Astrocyte of the cerebellum (primary cell): ENCODE measurements at regions of chr10 and their contacts with region 1.

Region 1: GRCh38 chr10:100033766-100034418 is 24.1 kb upstream of the DNMBP start:
- DNase-seq: no peak
- H3K4me3 ChIP-seq: no peak overlapping the region
- CTCF ChIP-seq: no peak

Region 2: GRCh38 chr10:99141022-99141422 is 892.9 kb before region 1 on chr10:
- in situ Hi-C with region 1: no loop called
- DNase-seq: no peak
- H3K4me3 ChIP-seq: no peak overlapping the region
- CTCF ChIP-seq: no peak

Region 3: DNA sequence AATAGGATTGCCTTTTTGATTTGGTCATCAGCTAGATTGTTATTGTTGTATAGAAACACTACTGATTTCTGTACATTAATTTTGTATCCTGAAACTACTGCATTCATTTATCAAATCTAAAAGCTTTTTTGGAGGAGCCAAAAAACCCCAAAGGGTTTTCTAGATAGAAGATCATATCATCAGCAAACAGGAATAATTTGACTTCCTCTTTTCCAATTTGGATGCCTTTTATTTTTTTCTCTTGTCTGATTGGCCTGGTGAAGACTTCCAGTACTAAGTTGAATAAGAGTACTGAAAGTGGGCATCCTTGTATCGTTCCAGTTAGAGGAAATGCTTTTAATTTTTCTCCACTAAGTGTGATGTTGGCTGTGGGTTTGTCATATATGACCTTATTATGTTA is 385.2 kb before region 1 on chr10:
- in situ Hi-C with region 1: no loop called
- DNase-seq: no peak
- H3K4me3 ChIP-seq: no peak overlapping the region
- CTCF ChIP-seq: no peak

Region 4: DNA sequence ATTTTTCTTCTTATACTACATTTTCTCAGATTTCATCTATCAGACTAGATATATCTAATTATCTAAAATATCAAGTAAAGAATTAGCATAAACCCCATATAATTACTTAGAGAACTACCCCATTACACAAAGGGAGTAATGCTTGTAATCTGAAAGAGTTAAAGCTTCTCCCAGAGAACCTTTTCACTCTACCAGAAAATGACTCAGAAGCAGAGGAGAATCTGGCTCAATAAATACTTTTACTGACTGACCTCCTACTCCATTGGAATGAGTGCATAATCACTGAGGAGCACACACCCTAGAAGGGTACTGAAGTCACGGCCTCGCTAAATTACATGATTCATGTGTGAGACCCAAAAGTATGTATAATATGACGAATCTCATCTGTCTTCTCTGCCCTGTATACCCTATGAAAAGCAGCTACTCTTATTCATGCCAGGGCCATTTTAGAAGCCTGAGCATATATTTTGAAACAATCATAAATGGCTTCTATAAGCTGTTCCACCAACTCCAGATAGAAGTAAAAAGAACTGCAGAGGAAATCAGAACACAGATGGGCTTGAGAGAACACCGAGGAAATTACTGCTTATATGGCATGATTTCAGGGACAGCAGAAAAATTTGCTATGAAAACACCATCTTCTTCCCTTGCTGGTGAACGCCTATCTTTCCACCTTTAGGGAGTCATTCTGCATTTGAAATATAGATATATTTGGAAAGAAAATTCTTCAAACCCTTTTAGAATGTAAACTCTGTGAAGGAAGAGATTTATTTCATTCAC is 56.8 kb before region 1 on chr10:
- in situ Hi-C with region 1: loop called (anchors 5 kb)
- DNase-seq: peak; percentile 59
- H3K4me3 ChIP-seq: no peak overlapping the region
- CTCF ChIP-seq: no peak

Region 5: DNA sequence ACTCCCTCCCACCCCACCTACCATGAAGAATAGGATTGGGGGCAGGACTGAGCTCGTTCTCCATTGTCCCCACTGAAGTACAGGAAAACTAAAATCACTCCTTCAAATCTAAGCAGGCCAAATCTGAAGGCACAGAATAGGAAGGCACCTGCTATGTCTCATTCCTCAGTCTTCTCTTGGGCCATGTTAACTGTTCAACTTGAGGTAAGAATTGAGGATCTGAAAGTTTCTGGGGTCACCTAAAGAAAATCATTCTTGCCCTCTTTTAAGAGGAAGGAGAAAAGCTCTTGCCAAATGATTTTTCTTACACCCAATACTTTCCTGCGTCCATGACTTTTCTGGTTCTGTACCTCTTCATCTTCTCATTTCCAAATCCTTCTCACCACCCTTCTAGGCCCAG is 42.9 kb after region 1 on chr10:
- in situ Hi-C with region 1: loop called (anchors 5 kb)
- DNase-seq: no peak
- H3K4me3 ChIP-seq: no peak overlapping the region
- CTCF ChIP-seq: no peak